Activated CD4-positive, alpha-beta memory T cell treated with anti-CD3 and anti-CD28 coated beads for 36 hours (primary cell): ENCODE measurements at regions of chr1 and their contacts with region 1.

Region 1: DNA sequence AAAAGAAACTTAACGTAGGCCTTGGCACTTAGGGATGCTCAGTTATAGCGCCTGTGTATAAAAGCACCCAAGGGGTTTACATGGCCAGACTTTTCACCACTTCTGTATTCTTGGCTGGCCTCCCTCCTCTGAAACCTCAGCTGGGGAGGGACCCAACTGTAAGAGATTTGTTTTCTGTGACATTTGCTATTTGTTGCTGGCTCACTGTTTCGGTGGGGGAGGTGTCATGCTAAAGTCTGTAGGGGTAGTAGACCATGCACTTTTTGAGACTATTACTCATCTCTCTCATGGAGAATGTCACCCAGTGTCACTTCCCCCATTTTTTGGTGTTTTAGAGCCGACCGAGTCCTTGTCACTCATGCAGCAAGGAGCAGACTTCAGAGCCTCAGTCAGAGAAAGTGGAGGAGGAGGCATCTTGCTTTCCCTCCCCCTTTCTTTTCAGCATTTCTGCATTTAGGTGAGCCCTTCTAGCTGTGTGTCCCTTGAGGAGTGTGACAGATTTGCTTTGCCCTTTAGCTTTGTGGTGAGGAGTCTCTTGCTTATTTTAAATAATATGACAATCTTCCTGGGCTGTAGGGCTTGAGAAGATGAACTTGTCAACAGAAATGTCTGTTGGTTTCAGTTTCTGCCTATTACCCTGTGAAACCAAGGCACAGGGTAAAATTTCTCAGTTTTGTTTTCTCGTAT is 160.1 kb downstream of the FASLG start:
- DNase-seq: peak; percentile 69
- H3K4me3 Mint-ChIP-seq: peak overlapping the region; percentile 4
- H3K27ac Mint-ChIP-seq: peak overlapping the region; percentile 63
- H3K4me1 Mint-ChIP-seq: peaks cover 24% of the 10 kb centered on the region
- H3K27me3 Mint-ChIP-seq: peaks cover 11% of the 10 kb centered on the region

Region 2: DNA sequence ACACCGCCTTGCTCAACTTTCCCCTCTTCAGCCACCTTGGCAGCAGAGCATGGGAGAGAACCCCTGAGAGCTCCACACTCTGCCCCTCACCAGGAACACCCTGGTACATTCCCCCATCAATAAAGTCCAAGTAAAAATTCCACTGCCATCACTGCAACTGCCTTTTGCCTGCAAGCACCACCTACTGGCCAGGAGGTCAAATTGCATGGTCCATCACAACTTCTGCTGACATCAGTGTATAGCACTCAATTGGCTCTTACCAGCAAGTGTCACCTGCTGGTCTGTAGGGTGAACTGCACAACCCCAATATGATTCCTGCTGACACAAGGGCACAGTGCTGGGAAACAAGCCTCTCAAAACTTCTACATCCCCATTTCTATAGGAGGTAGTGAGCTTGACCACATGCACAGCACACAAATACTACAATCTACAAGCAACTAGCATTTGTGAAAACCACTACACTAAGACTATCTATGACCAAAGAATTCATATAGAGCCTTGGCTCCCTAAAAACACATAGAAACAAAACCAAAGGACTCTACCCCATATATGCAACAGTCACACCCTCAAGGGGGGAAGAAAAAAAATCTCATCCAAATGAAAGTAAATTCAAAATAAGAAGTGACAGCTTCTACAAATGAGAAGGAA is 90.9 kb before region 1 on chr1:
- CTCF ChIA-PET with region 1: no interaction called
- POLR2A ChIA-PET with region 1: no interaction called
- intact Hi-C with region 1: no loop called
- DNase-seq: peak; percentile 69
- H3K4me3 Mint-ChIP-seq: no peak overlapping the region
- H3K27ac Mint-ChIP-seq: no peak overlapping the region
- H3K4me1 Mint-ChIP-seq: peaks cover 18% of the 10 kb centered on the region
- H3K27me3 Mint-ChIP-seq: peaks cover 4% of the 10 kb centered on the region

Region 3: GRCh38 chr1:172778456-172779455 is 40.2 kb before region 1 on chr1:
- CTCF ChIA-PET with region 1: interaction called, 9 read pairs
- POLR2A ChIA-PET with region 1: interaction called, 3 read pairs
- intact Hi-C with region 1: loop called (anchors 1 kb)
- DNase-seq: no peak
- H3K4me3 Mint-ChIP-seq: no peak overlapping the region
- H3K27ac Mint-ChIP-seq: no peak overlapping the region
- H3K4me1 Mint-ChIP-seq: peaks cover 13% of the 10 kb centered on the region
- H3K27me3 Mint-ChIP-seq: peaks cover 6% of the 10 kb centered on the region

Region 4: GRCh38 chr1:173038875-173039554 is 220.0 kb after region 1 on chr1:
- CTCF ChIA-PET with region 1: no interaction called
- POLR2A ChIA-PET with region 1: no interaction called
- intact Hi-C with region 1: loop called (anchors 5 kb)
- DNase-seq: peak; percentile 25
- H3K4me3 Mint-ChIP-seq: no peak overlapping the region
- H3K27ac Mint-ChIP-seq: no peak overlapping the region
- H3K4me1 Mint-ChIP-seq: peaks cover 11% of the 10 kb centered on the region
- H3K27me3 Mint-ChIP-seq: no peaks in the 10 kb centered on the region